BJ (cell line): ENCODE measurements at regions of chr12 and their contacts with region 1.

Region 1: GRCh38 chr12:54526812-54527630 is 22.4 kb upstream of the PDE1B start:
- DNase-seq: no peak
- H3K4me3 ChIP-seq: no peak overlapping the region
- H3K27me3 ChIP-seq: peaks cover 12% of the 10 kb centered on the region
- CTCF ChIP-seq: peak; percentile 49

Region 2: DNA sequence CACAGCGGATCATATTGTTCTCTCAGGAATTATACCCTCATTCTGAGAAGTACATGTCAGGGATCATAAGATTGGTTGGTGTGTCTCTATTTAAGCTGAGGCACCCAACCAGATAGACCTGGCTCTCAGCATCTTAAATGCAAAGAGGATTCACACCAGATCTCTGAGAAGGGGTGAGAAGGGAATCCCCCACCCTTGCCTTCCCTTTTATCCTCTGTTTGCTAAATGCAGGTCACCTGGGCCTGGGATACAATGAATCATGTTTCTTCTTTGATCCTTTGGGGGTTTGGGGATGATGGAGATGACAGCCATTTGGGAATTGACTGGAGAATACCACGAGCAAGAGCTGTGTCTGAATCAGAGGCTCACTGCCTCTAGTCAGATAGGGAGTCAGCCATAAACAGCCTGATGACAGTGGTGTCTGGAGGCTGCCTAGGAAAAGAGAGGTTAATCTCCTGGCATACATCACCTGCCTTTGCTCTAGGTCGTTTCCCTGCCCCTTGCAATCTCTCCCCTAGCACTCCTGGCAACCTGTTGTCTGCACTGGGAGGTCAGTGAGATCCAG is 11.2 kb after region 1 on chr12:
- CTCF ChIA-PET with region 1: interaction called, 23 read pairs
- POLR2A ChIA-PET with region 1: no interaction called
- DNase-seq: no peak
- H3K4me3 ChIP-seq: no peak overlapping the region
- H3K27me3 ChIP-seq: peaks cover 9% of the 10 kb centered on the region; the same call in 1 of the 2 replicates
- CTCF ChIP-seq: no peak

Region 3: DNA sequence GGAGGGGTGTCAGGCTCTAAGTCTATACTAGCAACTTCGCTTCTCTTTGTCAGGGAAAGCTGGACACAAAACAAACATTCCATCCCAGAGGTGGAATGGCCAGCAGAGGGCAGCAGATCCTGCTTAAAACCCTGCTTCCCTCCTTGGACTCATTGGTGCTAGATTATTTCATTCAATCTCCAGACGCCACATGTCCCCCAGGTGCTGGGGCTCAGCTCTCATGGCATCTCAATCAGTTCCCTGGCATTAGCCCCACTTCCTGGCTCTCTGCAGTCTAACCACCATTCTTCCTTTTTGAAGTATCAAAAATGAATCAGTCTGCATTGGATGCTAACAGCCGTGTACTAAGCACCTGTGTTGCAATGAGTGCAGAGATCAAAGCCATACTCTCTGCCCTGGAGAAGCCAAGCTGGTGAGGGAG is 69.5 kb after region 1 on chr12:
- CTCF ChIA-PET with region 1: interaction called, 10 read pairs
- POLR2A ChIA-PET with region 1: no interaction called
- DNase-seq: no peak
- H3K4me3 ChIP-seq: no peak overlapping the region
- H3K27me3 ChIP-seq: peaks cover 3% of the 10 kb centered on the region
- CTCF ChIP-seq: peak; percentile 92